ENCODE measurements at regions of chr14 and their contacts with region 1.

Region 1: GRCh38 chr14:105059035-105059924 is 6.0 kb downstream of the GPR132 start:
- DNase-seq: no peak
- H3K4me3 ChIP-seq: no peak overlapping the region
- CTCF ChIP-seq: no peak

Region 2: GRCh38 chr14:104936361-104937155 is 122.7 kb before region 1 on chr14:
- in situ Hi-C with region 1: loop called (anchors 5 kb)
- DNase-seq: no peak
- H3K4me3 ChIP-seq: no peak overlapping the region
- CTCF ChIP-seq: no peak